Right ventricle myocardium inferior (tissue), 1 donor: ENCODE measurements at regions of chr3 and their contacts with region 1.

Region 1: DNA sequence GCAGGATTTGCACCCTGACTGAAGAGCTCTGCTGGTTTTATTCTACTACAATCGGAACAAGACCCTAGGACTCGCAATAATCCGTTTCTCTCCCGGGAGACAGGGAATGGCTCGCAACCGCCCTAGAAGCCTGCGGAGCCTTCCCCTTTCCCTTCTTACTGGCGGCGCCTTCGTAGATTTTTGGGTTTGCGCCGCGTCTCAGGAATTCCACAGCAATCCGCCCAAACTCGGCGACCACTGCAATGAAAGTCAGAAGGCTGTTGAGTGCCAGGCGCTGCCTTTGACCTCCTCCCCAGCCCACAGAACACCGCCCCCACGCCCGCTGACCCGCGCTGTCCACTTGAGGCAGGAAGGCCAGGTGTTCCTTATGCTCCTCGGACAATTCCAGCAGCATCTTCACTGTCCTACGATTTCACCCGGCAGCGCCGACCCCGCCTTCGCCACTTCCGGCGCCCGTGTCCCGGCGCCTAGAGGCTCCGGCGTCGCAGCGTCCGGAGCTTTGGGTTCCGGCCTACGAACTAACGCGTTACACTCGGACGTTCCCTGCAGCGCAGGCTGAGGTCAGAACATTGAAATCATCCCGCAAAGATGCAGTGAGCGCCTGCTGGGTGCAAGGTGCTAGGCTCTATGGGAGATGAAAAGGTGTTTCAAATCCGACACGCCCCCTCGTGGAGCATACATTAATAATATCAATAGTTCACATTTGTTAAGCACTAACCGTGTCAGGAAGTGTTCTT is at the start of gene COMMD2:
- DNase-seq: peak; percentile 87
- ATAC-seq: peak; percentile 96
- total RNA-seq, gene COMMD2: 18.0 TPM

Region 2: DNA sequence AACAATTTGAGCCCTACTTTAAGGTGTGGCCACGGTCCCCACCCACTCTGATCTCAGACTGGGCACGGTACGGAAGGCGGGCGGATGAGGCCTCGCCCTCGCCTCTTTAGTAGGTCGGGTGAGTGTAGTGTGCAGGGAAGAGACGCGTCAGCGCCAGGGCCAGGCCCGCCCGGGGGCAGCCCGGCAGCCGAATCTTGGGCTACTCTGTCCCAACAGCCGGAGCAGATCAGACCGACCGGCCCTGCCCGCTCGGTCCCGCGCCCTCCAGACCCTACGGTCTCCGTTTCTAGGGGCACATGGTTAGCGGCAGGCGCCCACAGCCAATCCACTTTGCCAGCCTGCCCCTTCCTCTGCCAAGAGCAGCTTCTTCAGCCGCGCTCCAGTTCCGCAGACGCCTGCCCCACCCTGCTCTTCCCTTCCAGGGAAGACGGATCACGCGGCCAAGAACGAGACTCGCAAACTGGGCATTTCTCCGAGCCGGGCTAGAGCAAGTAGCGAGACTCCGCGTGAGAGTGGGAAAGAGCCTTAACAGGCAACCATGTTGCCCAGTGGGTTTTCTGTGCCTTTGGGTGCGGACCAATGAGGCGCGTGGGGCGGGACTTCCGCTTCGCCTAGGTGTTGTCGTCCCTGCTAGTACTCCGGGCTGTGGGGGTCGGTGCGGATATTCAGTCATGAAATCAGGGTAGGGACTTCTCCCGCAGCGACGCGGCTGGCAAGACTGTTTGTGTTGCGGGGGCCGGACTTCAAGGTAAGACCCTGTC is 60.6 kb after region 1 on chr3 and contains the start of gene RNF13:
- intact Hi-C with region 1: loop called (anchors 2 kb)
- DNase-seq: peak; percentile 99
- ATAC-seq: peak; percentile 96
- total RNA-seq, gene RNF13: 45.5 TPM